AG04450 (cell line): ENCODE measurements at regions of chr13 and their contacts with region 1.

Region 1: GRCh38 chr13:41411522-41411921 is 45.8 kb upstream of the RGCC start:
- DNase-seq: peak; percentile 16
- H3K4me3 ChIP-seq: no peak overlapping the region
- H3K27ac ChIP-seq: no peak overlapping the region
- H3K27me3 ChIP-seq: no peaks in the 10 kb centered on the region
- CTCF ChIP-seq: peak; percentile 48

Region 2: DNA sequence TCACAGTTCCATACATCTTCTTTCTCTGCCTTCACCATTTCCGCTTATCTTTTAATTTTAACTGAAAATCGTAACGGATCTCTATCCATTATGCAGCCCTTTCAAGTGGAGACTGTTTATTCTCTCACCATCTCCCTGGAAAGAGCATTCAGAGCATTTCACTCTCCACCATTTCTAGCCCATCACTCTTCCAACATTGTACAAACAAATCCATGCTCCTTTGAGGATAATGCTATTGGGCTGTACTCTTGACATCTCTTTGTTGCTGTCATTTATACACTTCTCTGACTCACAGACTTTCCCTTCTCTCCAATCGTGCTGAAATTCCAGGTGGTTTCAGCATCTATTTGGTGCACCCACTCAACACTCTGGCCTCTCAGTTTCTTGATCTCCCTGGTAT is 29.1 kb before region 1 on chr13:
- CTCF ChIA-PET with region 1: no interaction called
- POLR2A ChIA-PET with region 1: no interaction called
- DNase-seq: no peak
- H3K4me3 ChIP-seq: no peak overlapping the region
- H3K27ac ChIP-seq: no peak overlapping the region
- H3K27me3 ChIP-seq: no peaks in the 10 kb centered on the region
- CTCF ChIP-seq: no peak

Region 3: GRCh38 chr13:41394166-41394565 is 17.4 kb before region 1 on chr13:
- CTCF ChIA-PET with region 1: no interaction called
- POLR2A ChIA-PET with region 1: no interaction called
- DNase-seq: no peak
- H3K4me3 ChIP-seq: no peak overlapping the region
- H3K27ac ChIP-seq: no peak overlapping the region
- H3K27me3 ChIP-seq: peaks cover 2% of the 10 kb centered on the region
- CTCF ChIP-seq: no peak

Region 4: DNA sequence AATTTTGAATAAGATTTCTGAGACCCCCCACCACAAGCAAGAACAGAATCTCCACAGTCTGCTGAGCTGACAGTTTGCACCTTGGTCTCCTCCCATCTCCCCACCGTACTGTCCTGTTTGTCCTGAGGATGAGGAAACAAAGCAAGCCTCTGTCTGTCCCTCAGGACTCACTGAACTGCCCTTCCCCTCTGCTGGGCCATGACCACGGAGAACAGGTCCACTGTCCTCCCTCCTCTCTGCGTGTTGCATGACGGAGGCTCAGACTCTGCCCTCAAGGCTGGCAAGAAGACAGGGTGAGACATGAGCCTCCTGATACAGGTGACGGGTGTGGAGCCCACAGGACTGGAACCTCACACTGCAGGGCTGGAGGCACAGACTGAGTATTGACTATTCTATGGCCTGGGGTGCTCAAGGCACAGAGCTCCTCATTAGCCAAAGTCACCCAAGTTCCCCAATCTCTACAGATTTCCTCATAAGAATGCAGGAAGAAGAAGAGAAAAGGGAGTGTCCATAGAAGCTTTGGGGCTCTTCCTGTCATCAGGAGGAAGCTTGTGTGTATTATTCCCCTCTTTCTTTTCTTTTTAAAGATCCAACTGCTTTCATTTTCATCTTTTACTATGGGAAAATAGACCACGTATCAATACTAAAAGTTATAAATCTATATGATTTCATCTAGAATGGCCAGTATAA is 23.5 kb after region 1 on chr13:
- CTCF ChIA-PET with region 1: no interaction called
- POLR2A ChIA-PET with region 1: no interaction called
- DNase-seq: no peak
- H3K4me3 ChIP-seq: no peak overlapping the region
- H3K27ac ChIP-seq: no peak overlapping the region
- H3K27me3 ChIP-seq: no peaks in the 10 kb centered on the region
- CTCF ChIP-seq: no peak

Region 5: GRCh38 chr13:42048682-42049453 is 637.3 kb after region 1 on chr13:
- CTCF ChIA-PET with region 1: no interaction called
- POLR2A ChIA-PET with region 1: interaction called, 10 read pairs
- DNase-seq: no peak
- H3K4me3 ChIP-seq: peak overlapping the region; percentile 76
- H3K27ac ChIP-seq: peak overlapping the region; percentile 59
- H3K27me3 ChIP-seq: no peaks in the 10 kb centered on the region
- CTCF ChIP-seq: no peak